Activated naive CD4-positive, alpha-beta T cell treated with anti-CD3 and anti-CD28 coated beads, Interleukin-2, amount 10 ng/mL, durations not matched to agents 7 days and 5 days (primary cell): ENCODE measurements at regions of chr4 and their contacts with region 1.

Region 1: DNA sequence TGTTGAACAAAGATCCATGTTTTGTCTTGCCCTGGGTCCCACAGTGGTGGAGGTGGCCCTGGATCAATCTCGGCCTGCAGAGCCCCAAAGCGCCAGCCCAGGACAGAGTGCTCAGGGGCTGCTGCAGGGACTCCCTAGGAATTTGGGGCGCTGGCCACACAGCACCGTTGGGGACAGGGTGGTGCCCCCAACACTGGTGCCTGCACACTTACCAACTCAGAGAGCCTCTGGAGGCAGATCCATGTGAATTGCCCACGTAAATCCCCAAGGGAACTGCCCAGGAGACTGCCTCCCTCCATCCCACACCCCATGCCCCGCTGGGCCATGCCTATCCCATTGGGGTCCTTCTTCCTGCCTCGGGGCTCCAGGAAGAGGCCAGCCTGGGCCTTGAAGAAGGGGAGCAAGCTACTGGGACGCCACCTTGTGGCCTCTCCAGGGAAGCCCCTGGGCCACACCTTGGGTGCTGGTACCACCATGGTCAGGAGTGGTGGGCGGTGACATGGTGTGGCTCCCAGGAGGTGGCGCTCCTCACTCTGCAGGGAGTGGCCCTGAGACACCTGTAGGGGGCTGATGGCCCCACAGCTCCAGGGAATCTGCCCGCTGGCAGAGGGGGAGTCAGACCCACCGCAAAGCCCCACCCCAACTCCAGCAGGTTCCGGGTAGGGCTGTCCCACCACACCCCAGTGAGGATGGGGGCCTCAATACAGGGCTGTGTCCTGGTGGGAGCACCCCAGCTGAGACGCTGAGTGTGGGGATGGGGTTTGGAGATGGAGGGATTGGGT is 22.8 kb downstream of the CFAP99 start:
- DNase-seq: peak; percentile 87
- H3K4me3 Mint-ChIP-seq: no peak overlapping the region
- H3K27ac Mint-ChIP-seq: no peak overlapping the region
- H3K4me1 Mint-ChIP-seq: peaks cover 4% of the 10 kb centered on the region
- H3K27me3 Mint-ChIP-seq: peaks cover 16% of the 10 kb centered on the region

Region 2: GRCh38 chr4:1767770-1768366 is 673.7 kb before region 1 on chr4:
- CTCF ChIA-PET with region 1: no interaction called
- DNase-seq: peak; percentile 59
- H3K4me3 Mint-ChIP-seq: peak overlapping the region; percentile 56
- H3K27ac Mint-ChIP-seq: no peak overlapping the region
- H3K4me1 Mint-ChIP-seq: peaks cover 7% of the 10 kb centered on the region
- H3K27me3 Mint-ChIP-seq: peaks cover 76% of the 10 kb centered on the region

Region 3: GRCh38 chr4:2412885-2413716 is 28.5 kb before region 1 on chr4:
- CTCF ChIA-PET with region 1: interaction called, 12 read pairs
- DNase-seq: peak; percentile 94
- H3K4me3 Mint-ChIP-seq: peak overlapping the region; percentile 53
- H3K27ac Mint-ChIP-seq: peak overlapping the region; percentile 96
- H3K4me1 Mint-ChIP-seq: peaks cover 73% of the 10 kb centered on the region
- H3K27me3 Mint-ChIP-seq: peaks cover 54% of the 10 kb centered on the region

Region 4: GRCh38 chr4:2462218-2462991 is 20.8 kb after region 1 on chr4:
- CTCF ChIA-PET with region 1: interaction called, 13 read pairs
- DNase-seq: peak; percentile 73
- H3K4me3 Mint-ChIP-seq: peak overlapping the region; percentile 50
- H3K27ac Mint-ChIP-seq: no peak overlapping the region
- H3K4me1 Mint-ChIP-seq: peaks cover 17% of the 10 kb centered on the region
- H3K27me3 Mint-ChIP-seq: peaks cover 56% of the 10 kb centered on the region